Mammary epithelial cell (primary cell): ENCODE measurements at regions of chr11 and their contacts with region 1.

Region 1: GRCh38 chr11:129410395-129410960 is 34.8 kb downstream of the BARX2 start:
- DNase-seq: peak; percentile 27
- H3K4me3 ChIP-seq: no peak overlapping the region
- H3K27ac ChIP-seq: no peak overlapping the region
- H3K4me1 ChIP-seq: no peaks in the 10 kb centered on the region
- H3K27me3 ChIP-seq: peaks cover 9% of the 10 kb centered on the region
- CTCF ChIP-seq: peak in 1 of 2 donors; percentile 53

Region 2: DNA sequence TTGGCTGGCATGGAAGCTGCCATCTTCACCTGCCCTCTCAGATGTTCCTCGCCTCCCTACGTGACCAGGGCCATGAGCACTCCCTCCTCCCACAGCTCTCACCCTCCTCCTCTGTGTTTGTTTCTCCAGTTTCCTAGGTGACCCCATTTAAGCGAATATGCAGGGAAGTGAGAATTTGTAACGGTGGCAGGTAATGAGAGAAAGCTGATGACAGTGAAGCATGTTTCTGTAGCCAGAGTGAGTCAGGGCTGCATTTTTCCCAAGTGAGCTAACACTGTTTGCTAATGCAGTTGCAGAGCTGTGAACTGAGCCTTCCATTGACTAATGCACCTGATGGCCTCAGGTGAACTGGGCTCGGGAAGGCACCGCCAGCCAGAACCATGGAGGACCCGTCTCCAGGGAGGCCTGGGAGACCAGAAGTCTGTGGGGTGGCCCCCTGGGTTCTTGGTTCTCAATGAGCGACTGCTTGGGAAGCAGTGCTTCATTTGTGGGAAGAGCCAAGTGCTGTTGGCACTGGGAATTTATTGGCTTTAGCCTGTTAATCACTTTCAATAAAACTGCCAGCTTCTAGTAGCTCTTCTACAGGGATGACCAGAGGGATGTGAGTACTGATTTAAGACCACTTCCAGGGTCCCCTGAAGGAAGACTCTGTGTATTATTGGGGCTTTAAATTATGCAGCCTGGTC is 29.7 kb after region 1 on chr11:
- CTCF ChIA-PET with region 1: no interaction called
- dilution Hi-C with region 1: no loop called
- in situ Hi-C with region 1: no loop called
- intact Hi-C with region 1: no loop called
- DNase-seq: peak; percentile 99
- H3K4me3 ChIP-seq: no peak overlapping the region
- H3K27ac ChIP-seq: peak overlapping the region; percentile 73
- H3K4me1 ChIP-seq: peaks cover 18% of the 10 kb centered on the region
- H3K27me3 ChIP-seq: no peaks in the 10 kb centered on the region
- CTCF ChIP-seq: no peak

Region 3: GRCh38 chr11:129620237-129621104 is 210.0 kb after region 1 on chr11:
- CTCF ChIA-PET with region 1: no interaction called
- dilution Hi-C with region 1: no loop called
- in situ Hi-C with region 1: no loop called
- intact Hi-C with region 1: no loop called
- DNase-seq: peak; percentile 78
- H3K4me3 ChIP-seq: no peak overlapping the region
- H3K27ac ChIP-seq: no peak overlapping the region
- H3K4me1 ChIP-seq: peaks cover 8% of the 10 kb centered on the region
- H3K27me3 ChIP-seq: no peaks in the 10 kb centered on the region
- CTCF ChIP-seq: no peak

Region 4: DNA sequence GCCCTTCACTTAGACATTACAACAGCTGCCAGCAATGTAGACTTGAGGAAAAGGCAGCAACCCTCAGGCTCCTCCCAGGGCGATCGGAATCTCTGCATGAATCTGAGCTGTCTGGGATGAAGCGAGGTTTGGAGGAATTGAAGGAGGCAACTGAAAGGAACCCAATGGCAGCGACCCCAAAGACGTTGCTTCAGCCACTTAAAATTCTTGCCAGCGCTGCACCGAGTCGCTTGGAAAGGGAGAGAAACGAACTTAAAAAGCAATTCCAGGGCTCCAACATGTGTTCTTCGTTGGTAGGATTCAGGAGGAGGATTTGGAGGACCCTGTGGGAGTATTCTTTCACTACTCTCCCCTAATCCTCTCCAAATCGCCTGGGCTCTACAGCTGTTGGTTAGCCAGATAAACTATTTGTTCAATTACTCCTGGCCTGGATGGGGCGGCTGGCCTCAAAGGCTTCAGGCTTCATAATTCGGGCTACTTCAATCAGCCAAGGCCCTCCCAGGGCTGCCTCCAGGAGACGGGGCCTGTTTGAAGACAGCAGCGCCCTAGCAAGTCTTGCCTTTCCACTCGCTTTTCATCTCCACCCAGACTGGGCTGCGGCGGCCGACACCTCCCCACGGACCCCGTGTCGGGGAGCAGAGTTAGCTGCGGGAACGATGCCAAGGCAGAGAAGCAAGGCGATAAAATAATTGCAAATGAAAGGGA is 332.8 kb after region 1 on chr11:
- CTCF ChIA-PET with region 1: interaction called, 19 read pairs
- dilution Hi-C with region 1: no loop called
- in situ Hi-C with region 1: no loop called
- intact Hi-C with region 1: no loop called
- DNase-seq: no peak
- H3K4me3 ChIP-seq: no peak overlapping the region
- H3K27ac ChIP-seq: no peak overlapping the region
- H3K4me1 ChIP-seq: no peaks in the 10 kb centered on the region
- H3K27me3 ChIP-seq: peaks cover 10% of the 10 kb centered on the region
- CTCF ChIP-seq: no peak

Region 5: GRCh38 chr11:129881570-129882170 is 471.2 kb after region 1 on chr11:
- CTCF ChIA-PET with region 1: no interaction called
- dilution Hi-C with region 1: no loop called
- in situ Hi-C with region 1: no loop called
- intact Hi-C with region 1: no loop called
- DNase-seq: peak; percentile 17
- H3K4me3 ChIP-seq: no peak overlapping the region
- H3K27ac ChIP-seq: no peak overlapping the region
- H3K4me1 ChIP-seq: no peaks in the 10 kb centered on the region
- H3K27me3 ChIP-seq: no peaks in the 10 kb centered on the region
- CTCF ChIP-seq: peak; percentile 59 to 73